Lower leg skin (tissue), 4 donors: ENCODE measurements at regions of chr5 and their contacts with region 1.

Region 1: GRCh38 chr5:58466939-58467338 is 7.1 kb upstream of the PLK2 start:
- DNase-seq: no peak
- H3K4me3 ChIP-seq: no peak overlapping the region
- CTCF ChIP-seq: no peak
- POLR2A ChIP-seq: no peak

Region 2: DNA sequence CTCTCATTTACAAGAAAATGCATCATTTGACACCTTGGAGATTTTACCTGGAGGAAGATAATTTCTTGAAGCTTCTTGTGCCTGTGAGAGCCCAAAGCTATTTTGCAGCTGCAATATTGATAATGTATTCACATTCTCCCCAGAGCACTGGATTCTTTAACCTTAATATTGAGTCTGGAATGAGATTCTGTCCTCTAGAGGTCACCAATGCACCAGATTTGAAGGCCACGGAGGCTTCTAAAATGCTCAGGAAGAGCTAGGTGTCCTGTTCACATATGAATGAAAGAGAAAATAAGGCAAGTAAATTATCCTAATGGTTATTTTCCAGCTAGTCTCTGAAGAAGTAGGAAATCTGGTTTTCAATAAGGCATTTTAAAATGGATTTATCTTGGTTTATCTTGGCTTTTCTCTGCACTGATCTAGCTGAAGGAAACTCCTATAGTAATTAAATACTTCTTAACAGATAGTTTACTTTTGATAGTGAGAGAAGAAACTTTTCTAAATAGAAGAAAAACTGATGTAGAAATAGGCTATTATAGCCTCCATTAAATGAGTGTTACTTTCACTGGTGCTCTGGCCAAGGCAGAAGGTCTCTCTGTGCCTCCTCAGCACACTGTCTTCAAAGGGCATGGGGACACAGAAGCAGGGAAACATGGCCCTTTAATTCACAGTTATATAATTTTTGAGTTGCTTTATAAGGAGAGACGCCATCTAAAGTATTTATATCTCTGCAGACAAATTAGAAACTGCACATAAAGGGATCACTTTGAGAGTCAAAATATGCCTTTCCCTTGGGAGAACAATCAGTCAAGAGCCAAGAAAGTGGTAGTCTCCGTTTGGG is 687.3 kb before region 1 on chr5:
- intact Hi-C with region 1: loop called (anchors 2 kb)
- DNase-seq: peak in 1 of 2 donors; percentile 28
- H3K4me3 ChIP-seq: no peak overlapping the region
- CTCF ChIP-seq: no peak
- POLR2A ChIP-seq: no peak

Region 3: GRCh38 chr5:58424181-58424580 is 42.8 kb before region 1 on chr5:
- intact Hi-C with region 1: no loop called
- DNase-seq: no peak
- H3K4me3 ChIP-seq: no peak overlapping the region
- CTCF ChIP-seq: no peak
- POLR2A ChIP-seq: no peak